ENCODE measurements at regions of chr1 and their contacts with region 1.

Region 1: GRCh38 chr1:32753532-32754312 is 51.2 kb upstream of the SYNC start:
- DNase-seq: peak; percentile 78
- ATAC-seq: peak; percentile 88

Region 2: GRCh38 chr1:32372149-32372756 is 381.5 kb before region 1 on chr1:
- intact Hi-C with region 1: no loop called
- DNase-seq: no peak
- ATAC-seq: no peak

Region 3: GRCh38 chr1:32773018-32773763 is 19.5 kb after region 1 on chr1:
- intact Hi-C with region 1: no loop called
- DNase-seq: peak; percentile 89
- ATAC-seq: peak; percentile 81

Region 4: GRCh38 chr1:32791881-32792280 is 38.2 kb after region 1 on chr1:
- intact Hi-C with region 1: loop called (anchors 1 kb)
- DNase-seq: no peak
- ATAC-seq: no peak